Activated CD4-positive, alpha-beta memory T cell treated with anti-CD3 and anti-CD28 coated beads for 36 hours (primary cell): ENCODE measurements at regions of chr2 and their contacts with region 1.

Region 1: GRCh38 chr2:82525744-82526143 is 1933.3 kb downstream of the SUCLG1 start:
- DNase-seq: no peak
- H3K4me3 Mint-ChIP-seq: no peak overlapping the region
- H3K27ac Mint-ChIP-seq: no peak overlapping the region
- H3K4me1 Mint-ChIP-seq: no peaks in the 10 kb centered on the region
- H3K27me3 Mint-ChIP-seq: no peaks in the 10 kb centered on the region

Region 2: DNA sequence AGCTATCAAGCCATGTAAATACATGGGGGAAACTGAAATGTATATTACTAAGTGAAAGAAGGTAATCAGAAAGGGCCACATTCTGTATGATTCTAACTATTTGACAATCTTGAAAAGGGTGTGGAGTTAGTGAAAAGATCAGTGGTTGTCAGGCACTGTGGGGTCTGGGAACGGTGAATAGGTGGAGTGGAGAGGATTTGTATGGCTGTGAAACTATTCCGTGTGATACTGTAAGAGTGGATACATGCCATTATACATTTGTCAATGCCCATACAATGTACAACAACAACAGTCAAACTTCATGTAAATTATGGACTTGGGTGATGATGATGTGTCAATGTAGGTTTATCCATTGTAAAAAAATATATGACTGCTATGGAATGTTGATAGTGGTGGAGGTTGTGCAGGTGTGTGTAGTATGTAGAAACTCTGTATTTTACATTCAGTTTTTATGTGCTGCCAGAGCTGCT is 817.2 kb after region 1 on chr2:
- CTCF ChIA-PET with region 1: no interaction called
- POLR2A ChIA-PET with region 1: no interaction called
- intact Hi-C with region 1: loop called (anchors 2 kb)
- DNase-seq: no peak
- H3K4me3 Mint-ChIP-seq: no peak overlapping the region
- H3K27ac Mint-ChIP-seq: no peak overlapping the region
- H3K4me1 Mint-ChIP-seq: no peaks in the 10 kb centered on the region
- H3K27me3 Mint-ChIP-seq: no peaks in the 10 kb centered on the region